Activated naive CD4-positive, alpha-beta T cell treated with anti-CD3 and anti-CD28 coated beads for 36 hours (primary cell): ENCODE measurements at regions of chrX and their contacts with region 1.

Region 1: DNA sequence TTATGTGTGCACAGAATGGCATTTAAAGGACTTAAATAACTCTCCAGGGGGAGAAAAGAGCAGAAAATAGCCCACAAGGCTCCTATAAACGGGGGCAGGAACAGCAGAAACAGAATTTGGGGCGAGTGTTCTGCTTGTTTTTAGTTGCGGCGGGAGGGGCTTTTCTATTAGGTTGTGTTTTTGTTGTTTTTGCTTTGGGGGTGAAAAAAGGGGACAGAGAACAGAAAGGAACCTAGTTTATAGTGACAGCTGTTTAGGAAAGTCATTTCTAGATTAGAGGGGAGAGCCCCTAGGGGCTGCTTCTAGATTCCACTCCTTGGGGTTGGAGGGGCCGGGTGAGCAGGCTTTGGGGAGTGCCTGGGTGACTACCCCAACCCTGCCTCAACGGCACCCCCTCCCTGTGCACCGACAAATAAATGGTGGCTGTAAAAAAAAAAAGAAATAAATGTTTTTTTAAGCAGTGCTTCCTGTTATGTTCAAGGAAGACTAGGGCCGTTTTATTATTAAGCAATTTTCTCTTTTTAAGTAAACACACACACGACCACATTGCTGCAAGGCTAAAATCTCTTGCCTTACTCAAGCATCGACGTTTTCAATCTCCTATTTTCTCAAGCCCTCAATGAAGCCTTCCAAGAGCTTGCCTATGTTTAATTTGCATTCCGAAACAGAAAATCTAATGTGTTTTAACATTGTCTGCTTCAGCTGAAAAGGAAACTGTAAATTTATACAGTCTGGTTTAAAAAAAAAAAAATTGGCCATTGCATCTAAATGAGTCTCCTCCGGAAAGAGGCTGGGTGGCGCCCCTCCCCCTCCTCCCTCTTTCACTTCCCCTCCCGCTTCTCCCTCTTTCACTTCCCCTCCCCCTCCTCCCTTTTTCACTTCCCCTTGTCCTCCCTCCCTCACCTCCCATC is 123.3 kb upstream of the TBL1X start:
- DNase-seq: peak; percentile 83
- H3K4me3 Mint-ChIP-seq: peak overlapping the region; percentile 43
- H3K27ac Mint-ChIP-seq: peak overlapping the region; percentile 72
- H3K4me1 Mint-ChIP-seq: peaks cover 26% of the 10 kb centered on the region
- H3K27me3 Mint-ChIP-seq: peaks cover 2% of the 10 kb centered on the region

Region 2: GRCh38 chrX:9285342-9285771 is 56.2 kb before region 1 on chrX:
- CTCF ChIA-PET with region 1: no interaction called
- intact Hi-C with region 1: loop called (anchors 1 kb)
- DNase-seq: peak; percentile 78
- H3K4me3 Mint-ChIP-seq: no peak overlapping the region
- H3K27ac Mint-ChIP-seq: peak overlapping the region; percentile 83
- H3K4me1 Mint-ChIP-seq: peaks cover 25% of the 10 kb centered on the region
- H3K27me3 Mint-ChIP-seq: no peaks in the 10 kb centered on the region

Region 3: DNA sequence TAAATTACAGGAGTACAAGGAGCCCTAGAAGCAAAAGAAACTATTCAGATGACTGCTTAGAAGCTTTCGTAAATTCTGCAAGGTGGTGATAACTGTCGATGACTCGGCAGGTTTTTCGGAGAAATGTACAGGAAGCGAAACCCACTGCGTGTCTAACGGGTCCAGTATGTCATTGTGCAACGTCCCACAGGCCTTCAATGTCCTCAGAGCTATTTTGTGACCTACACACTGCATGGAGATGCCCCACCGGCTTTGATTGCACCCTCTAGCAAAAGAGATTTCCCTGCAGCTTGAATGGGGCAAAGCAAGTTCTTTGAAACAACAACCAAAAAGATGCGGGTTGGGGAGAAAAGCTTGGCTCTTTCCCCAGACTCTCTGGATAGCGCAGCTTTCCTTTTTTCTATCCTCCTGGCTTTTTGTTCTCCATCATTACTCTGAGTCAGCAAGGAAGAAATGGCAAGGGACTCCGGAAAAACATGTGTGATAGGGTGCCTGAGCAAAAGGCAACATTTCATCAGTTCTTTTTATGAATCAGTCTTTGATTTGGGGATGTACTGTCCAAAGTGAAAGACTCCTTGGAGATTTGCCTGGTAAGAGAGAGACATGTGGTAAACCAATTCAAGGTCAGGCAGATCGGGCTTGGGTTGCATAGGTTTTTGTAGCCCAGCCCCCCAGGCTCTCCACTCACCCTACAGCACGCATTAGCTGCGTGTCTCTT is 11.3 kb after region 1 on chrX:
- CTCF ChIA-PET with region 1: no interaction called
- intact Hi-C with region 1: loop called (anchors 1 kb)
- DNase-seq: peak; percentile 58
- H3K4me3 Mint-ChIP-seq: no peak overlapping the region
- H3K27ac Mint-ChIP-seq: peak overlapping the region; percentile 4
- H3K4me1 Mint-ChIP-seq: peaks cover 29% of the 10 kb centered on the region
- H3K27me3 Mint-ChIP-seq: no peaks in the 10 kb centered on the region

Region 4: DNA sequence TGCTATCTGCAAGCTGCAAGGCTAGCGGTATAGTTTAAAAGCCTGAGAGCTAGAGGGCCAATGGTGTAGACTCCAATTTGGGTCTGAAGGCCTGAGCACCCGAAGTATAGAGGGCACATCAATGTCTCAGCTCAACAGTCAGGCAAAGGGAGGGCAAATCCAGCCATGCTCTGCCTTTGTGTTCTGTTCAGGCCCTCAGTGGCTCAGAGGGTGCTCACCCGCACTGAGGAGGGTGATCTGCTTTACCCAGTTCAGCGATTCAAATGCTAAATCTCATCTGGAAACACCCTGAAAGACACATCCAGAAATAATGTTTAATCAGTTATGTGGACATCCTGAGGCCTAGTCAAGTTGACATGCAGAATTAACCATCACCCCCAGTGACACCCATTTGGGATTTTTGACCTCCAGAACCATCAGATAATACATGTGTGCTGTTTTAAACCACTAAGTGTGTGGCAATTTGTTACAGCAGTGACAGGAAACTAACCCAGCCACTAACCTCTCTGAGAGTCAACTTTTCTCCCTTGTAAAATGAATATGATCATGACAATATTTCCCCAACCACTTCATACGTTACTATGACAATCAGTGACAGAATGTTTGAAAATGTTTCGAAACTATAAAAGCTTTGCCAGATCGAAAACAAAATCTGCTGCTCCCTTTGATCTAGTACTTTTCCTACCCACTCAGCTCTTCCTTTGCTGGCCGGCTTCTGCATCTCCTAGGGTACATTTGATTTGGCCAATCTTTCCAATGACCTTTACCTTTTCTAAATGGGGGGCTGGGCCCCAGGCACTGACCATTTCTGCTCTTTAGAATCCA is 114.9 kb after region 1 on chrX:
- CTCF ChIA-PET with region 1: no interaction called
- intact Hi-C with region 1: loop called (anchors 1 kb)
- DNase-seq: peak; percentile 45
- H3K4me3 Mint-ChIP-seq: no peak overlapping the region
- H3K27ac Mint-ChIP-seq: peak overlapping the region; percentile 74
- H3K4me1 Mint-ChIP-seq: peaks cover 38% of the 10 kb centered on the region
- H3K27me3 Mint-ChIP-seq: no peaks in the 10 kb centered on the region

Region 5: DNA sequence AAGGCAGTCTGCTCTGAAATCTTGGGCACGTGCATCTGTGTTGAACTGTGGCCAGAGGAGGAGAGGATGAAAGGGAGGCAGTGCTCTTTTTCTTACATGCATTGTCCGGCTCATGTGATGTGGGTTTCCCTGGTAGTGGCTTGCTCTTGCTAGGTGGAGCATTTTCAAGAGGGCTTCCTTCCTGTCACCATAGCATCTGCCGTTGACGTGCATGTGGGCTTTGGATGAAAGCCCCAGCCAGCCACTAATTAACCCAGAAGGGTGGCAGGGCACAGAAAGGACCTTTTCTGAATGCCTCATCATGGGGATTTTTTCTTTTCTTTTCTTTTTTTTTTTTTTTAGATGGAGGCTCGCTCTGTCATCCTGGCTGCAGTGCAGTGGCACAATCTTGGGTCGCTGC is 302.8 kb after region 1 on chrX:
- CTCF ChIA-PET with region 1: no interaction called
- intact Hi-C with region 1: loop called (anchors 1 kb)
- DNase-seq: peak; percentile 70
- H3K4me3 Mint-ChIP-seq: no peak overlapping the region
- H3K27ac Mint-ChIP-seq: no peak overlapping the region
- H3K4me1 Mint-ChIP-seq: peaks cover 31% of the 10 kb centered on the region
- H3K27me3 Mint-ChIP-seq: no peaks in the 10 kb centered on the region

Region 6: DNA sequence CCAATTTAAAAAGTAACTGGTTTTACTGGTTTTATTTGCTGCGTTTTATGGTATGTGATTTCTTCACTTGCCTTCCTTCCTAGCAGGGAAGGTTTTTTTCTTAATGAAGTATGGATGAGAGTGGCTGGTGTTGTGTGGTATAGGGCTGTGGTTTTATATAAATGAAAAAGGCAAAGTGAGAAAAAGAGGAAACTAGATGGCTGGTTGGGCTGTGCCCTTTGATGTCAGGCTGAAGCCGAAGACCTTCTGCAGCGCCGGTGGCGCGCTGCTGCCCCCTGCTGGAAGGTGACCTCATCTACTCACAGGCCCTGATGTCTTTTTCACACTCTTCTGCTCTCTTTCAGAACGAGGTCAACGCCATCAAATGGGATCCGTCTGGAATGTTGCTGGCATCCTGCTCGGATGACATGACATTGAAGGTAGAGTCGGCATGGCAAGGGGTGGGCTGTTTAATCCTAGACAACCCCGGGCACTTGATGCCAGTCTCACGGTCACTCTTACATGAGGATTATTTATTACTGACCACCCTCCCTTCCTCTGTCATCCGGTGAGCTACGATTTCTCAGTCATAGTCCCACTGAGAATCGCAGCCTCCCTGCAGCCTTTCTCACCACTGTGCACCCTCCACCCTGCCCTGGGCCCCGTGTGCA is 367.5 kb after region 1 on chrX:
- CTCF ChIA-PET with region 1: no interaction called
- intact Hi-C with region 1: loop called (anchors 1 kb)
- DNase-seq: peak; percentile 78
- H3K4me3 Mint-ChIP-seq: no peak overlapping the region
- H3K27ac Mint-ChIP-seq: no peak overlapping the region
- H3K4me1 Mint-ChIP-seq: peaks cover 7% of the 10 kb centered on the region
- H3K27me3 Mint-ChIP-seq: no peaks in the 10 kb centered on the region

Region 7: GRCh38 chrX:10098270-10098713 is 756.7 kb after region 1 on chrX:
- CTCF ChIA-PET with region 1: no interaction called
- intact Hi-C with region 1: loop called (anchors 2 kb)
- DNase-seq: peak; percentile 80
- H3K4me3 Mint-ChIP-seq: peak overlapping the region; percentile 69
- H3K27ac Mint-ChIP-seq: peak overlapping the region; percentile 83
- H3K4me1 Mint-ChIP-seq: peaks cover 51% of the 10 kb centered on the region
- H3K27me3 Mint-ChIP-seq: no peaks in the 10 kb centered on the region